PC-9 (cell line): ENCODE measurements at regions of chr1 and their contacts with region 1.

Region 1: GRCh38 chr1:107782217-107782845 is 182.6 kb downstream of the VAV3 start:
- DNase-seq: peak; percentile 11 to 46
- H3K4me3 ChIP-seq: no peak overlapping the region
- H3K27ac ChIP-seq: no peak overlapping the region
- H3K4me1 ChIP-seq: peaks cover 10% of the 10 kb centered on the region
- H3K27me3 ChIP-seq: no peaks in the 10 kb centered on the region
- CTCF ChIP-seq: peak; percentile 99

Region 2: DNA sequence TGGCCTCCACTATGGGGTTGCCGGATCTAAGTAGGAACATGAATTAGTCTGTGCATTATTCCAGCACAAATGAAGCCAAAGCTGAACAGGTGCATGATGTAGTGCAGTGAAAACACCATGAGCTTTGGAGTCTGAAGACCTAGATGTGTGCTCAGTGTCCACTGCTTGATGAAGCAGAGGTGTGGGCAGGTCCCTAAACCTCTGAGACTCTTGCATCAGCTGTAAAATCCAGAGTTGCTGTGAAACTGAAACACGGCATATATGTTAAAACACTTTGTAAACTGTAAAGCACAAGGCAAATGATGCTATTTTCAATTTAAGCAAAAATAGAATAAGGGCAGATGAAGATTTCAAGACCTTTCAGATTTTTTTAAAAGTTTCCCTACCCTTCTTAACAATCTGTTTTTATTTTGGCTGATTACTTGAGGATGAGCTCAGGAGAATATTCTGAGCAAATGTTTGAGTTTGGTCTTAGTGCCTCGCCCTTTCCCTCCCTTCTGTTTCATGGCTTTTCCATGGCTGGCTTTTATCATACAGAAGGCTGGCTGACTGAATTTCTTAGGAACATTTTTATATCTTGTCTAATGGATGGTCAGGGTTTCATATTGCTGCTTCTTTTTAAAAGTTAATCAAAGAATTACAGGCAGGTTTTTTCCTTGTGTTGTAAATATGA is 419.7 kb before region 1 on chr1:
- CTCF ChIA-PET with region 1: no interaction called
- POLR2A ChIA-PET with region 1: no interaction called
- intact Hi-C with region 1: no loop called
- DNase-seq: no peak
- H3K4me3 ChIP-seq: no peak overlapping the region
- H3K27ac ChIP-seq: no peak overlapping the region
- H3K4me1 ChIP-seq: no peaks in the 10 kb centered on the region
- H3K27me3 ChIP-seq: no peaks in the 10 kb centered on the region
- CTCF ChIP-seq: no peak

Region 3: DNA sequence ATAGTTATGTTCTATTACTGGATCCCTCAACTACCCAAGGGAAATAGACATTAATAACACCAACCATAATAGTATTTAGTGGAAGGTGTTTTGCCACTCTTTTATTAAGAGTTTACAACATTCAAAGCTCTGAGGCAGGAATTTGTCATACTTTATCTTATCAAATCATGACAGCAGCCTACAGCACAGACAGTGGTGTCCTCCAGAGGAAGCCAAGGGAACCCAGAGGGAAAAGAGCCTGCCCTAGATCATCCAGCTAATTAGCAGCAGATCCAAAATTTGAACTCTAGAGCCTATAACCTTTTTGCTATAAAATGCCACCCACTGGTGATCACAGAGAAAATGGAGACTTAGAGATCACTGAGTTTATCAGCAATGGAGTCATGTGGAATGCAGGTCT is 164.5 kb after region 1 on chr1:
- CTCF ChIA-PET with region 1: no interaction called
- POLR2A ChIA-PET with region 1: no interaction called
- intact Hi-C with region 1: no loop called
- DNase-seq: no peak
- H3K4me3 ChIP-seq: no peak overlapping the region
- H3K27ac ChIP-seq: no peak overlapping the region
- H3K4me1 ChIP-seq: no peaks in the 10 kb centered on the region
- H3K27me3 ChIP-seq: no peaks in the 10 kb centered on the region
- CTCF ChIP-seq: no peak

Region 4: GRCh38 chr1:107963601-107964335 is 181.4 kb after region 1 on chr1:
- CTCF ChIA-PET with region 1: no interaction called
- POLR2A ChIA-PET with region 1: no interaction called
- intact Hi-C with region 1: loop called (anchors 10 kb)
- DNase-seq: no peak
- H3K4me3 ChIP-seq: no peak overlapping the region
- H3K27ac ChIP-seq: no peak overlapping the region
- H3K4me1 ChIP-seq: peaks cover 11% of the 10 kb centered on the region
- H3K27me3 ChIP-seq: no peaks in the 10 kb centered on the region
- CTCF ChIP-seq: no peak

Region 5: GRCh38 chr1:108089477-108089876 is 307.1 kb after region 1 on chr1:
- CTCF ChIA-PET with region 1: no interaction called
- POLR2A ChIA-PET with region 1: no interaction called
- intact Hi-C with region 1: no loop called
- DNase-seq: no peak
- H3K4me3 ChIP-seq: no peak overlapping the region
- H3K27ac ChIP-seq: no peak overlapping the region
- H3K4me1 ChIP-seq: no peaks in the 10 kb centered on the region
- H3K27me3 ChIP-seq: no peaks in the 10 kb centered on the region
- CTCF ChIP-seq: no peak

Region 6: DNA sequence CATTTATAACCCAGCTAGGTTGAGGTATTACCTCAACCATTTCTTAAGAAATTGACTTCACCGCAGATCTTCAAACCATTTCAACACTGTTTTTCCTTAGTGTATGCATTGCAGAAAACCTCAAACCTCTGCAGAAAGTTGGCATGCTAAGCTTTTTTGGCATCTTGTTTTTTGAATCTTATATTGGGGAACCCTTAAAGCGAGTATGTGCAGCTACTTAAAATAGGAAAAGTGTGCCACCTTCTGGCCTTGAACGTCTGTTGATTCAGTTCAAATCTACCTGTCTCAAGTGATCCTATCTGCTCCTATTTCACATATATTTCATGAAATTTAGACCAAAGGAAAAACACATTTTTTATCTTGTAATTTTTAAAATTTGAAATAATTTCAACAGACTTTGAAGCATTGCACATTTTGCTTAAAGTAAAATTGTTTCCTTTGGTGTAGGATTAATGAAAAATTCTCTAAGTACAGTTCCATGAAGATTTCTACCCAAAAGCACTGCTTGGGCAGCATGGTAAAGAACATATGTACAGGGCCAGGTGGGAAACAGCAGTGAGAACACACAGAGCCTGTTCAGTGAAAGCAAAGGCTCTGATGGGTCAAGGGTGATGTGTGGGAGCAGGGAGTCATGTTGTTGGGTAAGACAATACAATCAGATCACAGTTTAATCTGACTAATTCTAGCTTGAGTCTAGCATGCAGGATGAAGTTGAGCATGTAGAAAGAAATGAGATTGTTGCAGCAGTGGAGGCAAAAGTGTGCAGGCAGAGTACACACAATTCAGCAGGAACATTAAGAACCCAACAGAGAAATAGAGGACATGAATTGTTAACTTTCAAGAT is 861.4 kb after region 1 on chr1:
- CTCF ChIA-PET with region 1: interaction called, 9 read pairs
- POLR2A ChIA-PET with region 1: no interaction called
- intact Hi-C with region 1: loop called (anchors 1 kb)
- DNase-seq: peak; percentile 23 to 69
- H3K4me3 ChIP-seq: no peak overlapping the region
- H3K27ac ChIP-seq: no peak overlapping the region
- H3K4me1 ChIP-seq: peaks cover 11% of the 10 kb centered on the region
- H3K27me3 ChIP-seq: no peaks in the 10 kb centered on the region
- CTCF ChIP-seq: peak; percentile 82